Motor neuron (in vitro differentiated cells): ENCODE measurements at regions of chr4 and their contacts with region 1.

Region 1: DNA sequence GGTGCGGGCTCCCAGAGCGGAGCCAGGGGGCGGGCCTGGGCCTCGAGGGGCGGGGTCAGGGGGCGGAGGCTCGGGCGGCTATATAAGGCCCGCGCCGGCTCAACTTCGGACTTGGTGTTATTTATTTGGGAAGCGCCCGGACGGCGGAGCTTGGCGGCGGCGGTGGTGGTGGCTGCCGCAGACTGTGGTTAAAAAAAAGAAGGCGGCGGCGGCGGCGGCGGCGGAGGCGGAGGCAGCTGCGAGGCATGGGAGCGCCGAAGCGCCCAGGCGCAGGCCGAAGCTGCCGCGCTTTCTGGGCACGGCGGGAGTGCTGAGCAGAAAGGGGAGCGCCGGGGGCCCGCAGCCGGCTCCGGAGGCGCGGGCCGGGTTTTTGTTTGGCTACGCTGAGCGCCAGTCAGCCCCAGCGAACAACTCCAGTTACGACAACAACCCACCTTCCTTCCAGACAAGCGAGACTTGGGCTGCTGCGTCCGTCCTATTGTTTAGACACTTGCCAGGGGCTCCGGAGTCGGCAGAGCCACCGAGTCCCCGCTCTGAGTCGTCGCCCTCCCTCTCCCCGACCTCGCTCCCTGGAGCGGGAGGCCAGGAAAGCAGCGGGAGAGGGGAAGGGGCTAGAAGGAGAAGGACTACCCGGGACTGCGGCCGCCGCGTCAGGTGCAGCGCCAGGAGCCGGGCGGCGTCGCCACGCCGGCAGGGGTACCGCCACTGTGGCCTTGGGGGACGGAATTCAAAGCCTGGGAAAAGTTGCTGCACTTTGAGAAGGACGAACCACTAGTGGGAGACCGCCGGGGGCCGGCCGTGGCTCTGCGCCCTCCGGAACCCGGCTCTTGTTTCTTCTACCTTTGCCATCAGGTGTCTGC is at the start of gene SLIT2:
- ATAC-seq: peak; percentile 62 to 83 (median 79)
- H3K4me3 ChIP-seq: peak within 1 kb of the TSS; percentile 44 to 82 (median 45)
- H3K27ac ChIP-seq: no peak within 1 kb of the TSS
- H3K4me1 ChIP-seq: peaks cover 0 to 17% of the 10 kb centered on the region in 2 donors
- total RNA-seq, gene SLIT2: 31.0 to 178 (median 107) TPM

Region 2: DNA sequence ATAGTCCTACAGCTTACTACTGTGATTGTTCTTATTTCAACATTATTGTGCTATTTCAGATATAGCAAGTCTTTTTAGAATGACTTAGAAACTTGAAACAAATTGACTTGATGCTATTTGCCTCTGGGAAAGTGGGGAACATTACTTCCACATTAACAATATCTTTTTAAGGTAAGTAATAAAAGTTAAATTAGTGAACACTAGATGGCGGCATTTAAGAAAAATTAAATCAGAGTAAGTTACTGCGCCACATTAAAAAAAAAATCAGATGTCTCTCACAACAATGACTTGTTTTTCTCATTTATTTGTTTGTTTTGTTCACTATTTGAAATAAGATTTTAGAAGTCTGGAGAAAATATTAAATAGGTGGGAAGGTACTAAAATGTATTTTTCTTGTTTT is 1027.2 kb before region 1 on chr4:
- in situ Hi-C with region 1: loop called in 1 of 9 experiments (anchors 25 kb)
- ATAC-seq: peak in 2 of 8 experiments; percentile 33 to 41
- H3K4me3 ChIP-seq: no peak overlapping the region
- H3K27ac ChIP-seq: no peak overlapping the region
- H3K4me1 ChIP-seq: no peaks in the 10 kb centered on the region

Region 3: DNA sequence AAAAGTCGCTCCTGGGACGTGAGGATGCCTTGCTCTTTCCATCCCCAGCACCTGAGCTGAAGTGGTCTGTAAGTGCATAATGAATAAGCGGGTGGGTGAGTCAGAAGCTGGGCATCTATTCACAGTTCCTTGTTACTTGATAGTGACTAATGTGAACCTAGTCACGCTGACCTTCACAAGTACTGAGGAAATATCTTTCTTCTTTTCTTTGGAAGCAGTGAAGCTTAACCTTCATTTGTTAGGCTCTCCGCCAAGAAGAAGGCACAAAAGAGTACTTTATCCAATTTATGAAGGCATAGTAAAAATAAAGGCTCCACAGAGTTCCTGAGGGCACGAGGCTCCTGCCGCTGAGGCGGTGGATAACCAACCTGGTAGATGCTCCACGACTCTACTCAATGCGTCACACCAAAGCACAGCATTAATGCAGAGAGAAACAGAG is 476.0 kb before region 1 on chr4:
- in situ Hi-C with region 1: loop called in 1 of 9 experiments (anchors 25 kb)
- ATAC-seq: peak in 6 of 8 experiments; percentile 22 to 99 (median 98)
- H3K4me3 ChIP-seq: no peak overlapping the region
- H3K27ac ChIP-seq: no peak overlapping the region
- H3K4me1 ChIP-seq: peaks cover 3 to 10% of the 10 kb centered on the region in 2 donors

Region 4: DNA sequence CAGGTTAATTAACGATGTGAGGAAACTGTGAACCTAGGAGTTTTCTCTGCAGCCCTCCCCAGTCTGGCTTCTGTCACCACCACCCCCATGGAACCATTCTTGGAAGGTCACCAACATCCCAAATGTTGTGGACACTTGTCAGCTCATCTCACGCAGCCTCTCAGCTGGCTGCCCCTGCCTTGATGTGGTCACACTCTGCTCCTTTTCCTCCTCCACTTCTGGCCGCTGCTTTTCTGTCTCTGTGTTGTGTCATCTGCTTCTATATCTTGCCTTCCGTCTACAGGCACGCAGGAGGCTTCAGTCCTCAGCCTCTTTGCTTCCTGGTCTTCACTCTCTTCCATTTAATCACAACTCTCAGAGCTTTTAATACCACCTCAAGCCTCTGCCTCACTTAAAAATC is 371.8 kb before region 1 on chr4:
- in situ Hi-C with region 1: loop called in 1 of 9 experiments (anchors 25 kb)
- ATAC-seq: peak in 1 of 8 experiments; percentile 33
- H3K4me3 ChIP-seq: no peak overlapping the region
- H3K27ac ChIP-seq: no peak overlapping the region
- H3K4me1 ChIP-seq: no peaks in the 10 kb centered on the region

Region 5: DNA sequence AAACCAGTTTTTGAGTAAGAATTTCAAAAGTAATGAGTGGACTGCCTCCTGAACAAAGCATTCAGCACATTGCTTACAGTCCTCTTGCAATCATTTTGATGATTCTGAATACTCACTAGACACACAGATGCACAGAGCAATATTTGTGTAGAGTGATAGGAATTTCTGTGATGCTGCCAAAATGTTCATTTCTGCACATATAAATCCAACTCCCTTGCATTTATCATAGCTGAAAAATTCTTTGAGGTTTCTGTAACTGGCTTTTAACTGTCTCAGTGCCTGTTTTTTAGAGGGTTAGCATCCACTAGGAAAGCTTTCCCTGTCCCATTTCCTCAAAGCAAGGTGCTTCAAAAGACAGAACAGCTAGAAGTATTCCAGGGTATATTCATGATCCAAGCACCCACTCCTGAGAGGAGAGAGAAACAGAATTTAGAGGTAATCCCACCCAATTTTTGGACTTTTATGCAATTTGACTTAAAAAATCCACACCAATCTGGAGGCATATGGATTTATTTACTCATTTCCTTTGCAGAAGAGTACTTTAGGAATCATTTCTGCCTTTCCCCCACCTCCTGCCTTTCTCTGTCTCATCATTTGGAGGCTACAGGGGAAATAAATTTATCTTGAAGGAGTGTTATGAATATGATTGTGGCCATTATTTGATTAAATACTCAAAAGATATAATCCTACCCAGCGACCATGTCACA is 234.8 kb before region 1 on chr4:
- in situ Hi-C with region 1: loop called in 1 of 9 experiments (anchors 10 kb)
- ATAC-seq: peak in 3 of 8 experiments; percentile 29 to 69 (median 43)
- H3K4me3 ChIP-seq: no peak overlapping the region
- H3K27ac ChIP-seq: no peak overlapping the region
- H3K4me1 ChIP-seq: no peaks in the 10 kb centered on the region

Region 6: DNA sequence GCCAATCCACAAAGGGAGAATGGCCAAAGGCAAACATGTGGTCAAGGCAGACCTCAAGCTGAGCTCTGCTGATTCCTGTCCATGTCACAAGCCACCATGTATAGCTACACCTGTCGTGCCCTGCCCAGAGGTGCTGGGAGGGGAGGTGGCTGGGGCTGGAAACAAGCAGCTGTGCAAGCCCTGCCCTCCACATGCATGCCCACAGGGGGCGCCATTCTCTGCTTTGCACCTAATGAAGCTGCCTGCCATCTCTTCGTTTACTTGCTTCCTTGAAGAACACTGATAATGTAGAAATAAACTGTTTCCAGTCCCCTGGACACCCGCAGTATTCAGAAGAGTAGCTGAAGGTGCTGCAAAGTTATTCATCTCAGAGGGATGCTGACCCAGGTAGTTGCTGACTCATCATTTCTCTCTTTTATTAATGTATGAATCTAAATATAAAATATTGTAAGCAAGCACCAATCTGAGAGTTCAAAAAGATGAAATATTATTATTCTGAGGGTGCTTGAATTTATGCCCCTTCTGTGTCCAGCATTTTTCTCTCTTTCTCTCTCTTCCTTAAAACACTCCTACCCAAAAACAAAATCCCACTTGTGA is 1985.2 kb after region 1 on chr4:
- in situ Hi-C with region 1: no loop called
- ATAC-seq: peak in 2 of 8 experiments; percentile 22 to 26
- H3K4me3 ChIP-seq: no peak overlapping the region
- H3K27ac ChIP-seq: no peak overlapping the region
- H3K4me1 ChIP-seq: peaks cover 19 to 37% of the 10 kb centered on the region in 2 donors